ENCODE measurements at regions of chr22 and their contacts with region 1.

Region 1: DNA sequence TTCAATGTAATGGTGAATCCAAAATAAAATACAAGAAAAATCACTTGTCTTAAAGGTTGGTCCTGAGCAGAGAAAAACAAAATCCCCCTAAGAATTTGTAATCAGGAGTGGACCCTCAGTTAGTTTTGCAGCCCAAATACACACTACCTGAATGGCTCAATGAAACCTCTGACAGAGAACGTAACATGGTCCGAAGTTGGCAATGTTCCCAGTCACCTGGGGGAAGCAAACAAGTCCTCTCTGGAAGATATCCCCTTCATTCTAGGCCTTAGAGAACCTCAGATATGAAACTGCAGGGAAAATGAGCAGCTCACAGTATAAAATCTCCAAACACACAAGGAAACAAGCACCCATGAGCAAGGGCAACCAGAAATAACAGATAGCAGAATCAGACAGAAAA is 58.2 kb downstream of the MORC2 start:
- DNase-seq: no peak
- ATAC-seq: no peak
- H3K4me3 ChIP-seq: no peak overlapping the region
- H3K27ac ChIP-seq: no peak overlapping the region
- H3K4me1 ChIP-seq: no peaks in the 10 kb centered on the region
- H3K27me3 ChIP-seq: no peaks in the 10 kb centered on the region
- CTCF ChIP-seq: no peak

Region 2: GRCh38 chr22:30843245-30843644 is 67.1 kb before region 1 on chr22:
- CTCF ChIA-PET with region 1: no interaction called
- POLR2A ChIA-PET with region 1: no interaction called
- intact Hi-C with region 1: loop called (anchors 10 kb)
- DNase-seq: peak; percentile 69
- ATAC-seq: no peak
- H3K4me3 ChIP-seq: no peak overlapping the region
- H3K27ac ChIP-seq: peak overlapping the region; percentile 67
- H3K4me1 ChIP-seq: peaks cover 7% of the 10 kb centered on the region
- H3K27me3 ChIP-seq: no peaks in the 10 kb centered on the region
- CTCF ChIP-seq: no peak